MCF 10A (cell line): ENCODE measurements at regions of chr1 and their contacts with region 1.

Region 1: DNA sequence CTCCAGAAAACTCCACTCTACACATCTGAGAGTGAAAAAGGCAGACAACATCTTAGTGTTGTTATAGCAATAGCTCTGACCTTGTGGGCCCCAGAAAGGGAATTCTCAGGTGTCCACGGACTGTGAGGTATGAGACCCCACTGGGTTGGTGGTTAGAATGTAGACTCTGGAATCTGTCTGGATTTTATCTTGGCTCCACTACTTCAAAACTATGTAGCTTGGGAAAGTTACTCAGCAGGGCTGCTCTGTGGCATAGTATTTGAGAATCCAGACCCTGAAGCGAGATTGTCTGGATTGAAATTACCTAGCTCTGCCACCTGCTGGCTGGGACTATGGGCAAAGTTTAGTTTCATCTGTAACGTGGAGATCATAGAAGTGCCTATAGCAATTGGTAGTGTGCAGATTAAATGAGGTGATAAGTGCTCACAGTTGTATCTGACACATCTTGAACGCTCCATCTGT is 25.8 kb downstream of the PRDM2 start:
- DNase-seq: peak; percentile 60
- H3K4me3 Mint-ChIP-seq: no peak overlapping the region
- H3K27ac Mint-ChIP-seq: no peak overlapping the region
- H3K4me1 Mint-ChIP-seq: peaks cover 20% of the 10 kb centered on the region
- H3K27me3 Mint-ChIP-seq: no peaks in the 10 kb centered on the region
- CTCF ChIP-seq: peak; percentile 57

Region 2: GRCh38 chr1:13469343-13469742 is 256.4 kb before region 1 on chr1:
- CTCF ChIA-PET with region 1: interaction called, 3 read pairs
- POLR2A ChIA-PET with region 1: no interaction called
- intact Hi-C with region 1: loop called (anchors 2 kb)
- DNase-seq: peak; percentile 55
- H3K4me3 Mint-ChIP-seq: no peak overlapping the region
- H3K27ac Mint-ChIP-seq: no peak overlapping the region
- H3K4me1 Mint-ChIP-seq: no peaks in the 10 kb centered on the region
- H3K27me3 Mint-ChIP-seq: no peaks in the 10 kb centered on the region
- CTCF ChIP-seq: peak; percentile 46

Region 3: GRCh38 chr1:13667691-13668090 is 58.1 kb before region 1 on chr1:
- CTCF ChIA-PET with region 1: interaction called, 96 read pairs
- POLR2A ChIA-PET with region 1: interaction called, 16 read pairs
- intact Hi-C with region 1: loop called (anchors 1 kb)
- DNase-seq: no peak
- H3K4me3 Mint-ChIP-seq: no peak overlapping the region
- H3K27ac Mint-ChIP-seq: no peak overlapping the region
- H3K4me1 Mint-ChIP-seq: peaks cover 20% of the 10 kb centered on the region
- H3K27me3 Mint-ChIP-seq: no peaks in the 10 kb centered on the region
- CTCF ChIP-seq: no peak

Region 4: DNA sequence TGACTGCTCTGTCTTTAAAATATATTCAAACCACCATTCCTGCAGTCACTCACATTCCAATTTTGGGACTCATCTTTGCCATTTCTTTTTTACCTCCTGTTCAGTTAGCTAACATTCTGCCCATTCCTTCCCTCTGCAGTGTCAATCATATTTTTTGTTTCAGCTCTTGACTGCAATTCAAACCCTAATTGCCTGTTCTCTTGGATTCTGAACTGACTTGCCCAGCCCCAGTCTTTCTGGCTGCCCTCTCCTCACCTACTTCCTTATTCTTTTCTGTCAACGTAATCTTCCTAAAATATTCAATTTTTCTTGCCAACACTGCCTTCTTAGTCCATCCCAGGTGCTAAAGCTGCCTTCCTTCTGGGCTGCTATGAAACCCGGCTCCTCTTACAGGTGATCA is 19.7 kb before region 1 on chr1:
- CTCF ChIA-PET with region 1: interaction called, 11 read pairs
- POLR2A ChIA-PET with region 1: interaction called, 6 read pairs
- intact Hi-C with region 1: no loop called
- DNase-seq: no peak
- H3K4me3 Mint-ChIP-seq: no peak overlapping the region
- H3K27ac Mint-ChIP-seq: no peak overlapping the region
- H3K4me1 Mint-ChIP-seq: peaks cover 13% of the 10 kb centered on the region
- H3K27me3 Mint-ChIP-seq: no peaks in the 10 kb centered on the region
- CTCF ChIP-seq: no peak

Region 5: GRCh38 chr1:13714851-13715250 is 10.9 kb before region 1 on chr1:
- CTCF ChIA-PET with region 1: interaction called, 16 read pairs
- POLR2A ChIA-PET with region 1: interaction called, 6 read pairs
- intact Hi-C with region 1: no loop called
- DNase-seq: no peak
- H3K4me3 Mint-ChIP-seq: no peak overlapping the region
- H3K27ac Mint-ChIP-seq: no peak overlapping the region
- H3K4me1 Mint-ChIP-seq: peaks cover 9% of the 10 kb centered on the region
- H3K27me3 Mint-ChIP-seq: no peaks in the 10 kb centered on the region
- CTCF ChIP-seq: peak; percentile 24

Region 6: GRCh38 chr1:13748610-13749505 is 23.1 kb after region 1 on chr1:
- CTCF ChIA-PET with region 1: interaction called, 15 read pairs
- POLR2A ChIA-PET with region 1: interaction called, 4 read pairs
- intact Hi-C with region 1: no loop called
- DNase-seq: peak; percentile 97
- H3K4me3 Mint-ChIP-seq: peak overlapping the region; percentile 91
- H3K27ac Mint-ChIP-seq: peak overlapping the region; percentile 91
- H3K4me1 Mint-ChIP-seq: peaks cover 35% of the 10 kb centered on the region
- H3K27me3 Mint-ChIP-seq: no peaks in the 10 kb centered on the region
- CTCF ChIP-seq: no peak